A549 (cell line): ENCODE measurements at regions of chr20 and their contacts with region 1.

Region 1: GRCh38 chr20:62376112-62377063 is 9.3 kb upstream of the LAMA5 start:
- DNase-seq: peak in 1 of 2 experiments; percentile 81
- ATAC-seq: peak; percentile 70 to 85
- H3K4me3 ChIP-seq: no peak overlapping the region
- H3K27ac ChIP-seq: peak overlapping the region; percentile 81 to 94
- H3K4me1 ChIP-seq: peaks cover 75% of the 10 kb centered on the region
- CTCF ChIP-seq: peak; percentile 62
- EP300 ChIP-seq: no peak
- POLR2A ChIP-seq: no peak
- RAD21 ChIP-seq: peak; percentile 69 to 79

Region 2: DNA sequence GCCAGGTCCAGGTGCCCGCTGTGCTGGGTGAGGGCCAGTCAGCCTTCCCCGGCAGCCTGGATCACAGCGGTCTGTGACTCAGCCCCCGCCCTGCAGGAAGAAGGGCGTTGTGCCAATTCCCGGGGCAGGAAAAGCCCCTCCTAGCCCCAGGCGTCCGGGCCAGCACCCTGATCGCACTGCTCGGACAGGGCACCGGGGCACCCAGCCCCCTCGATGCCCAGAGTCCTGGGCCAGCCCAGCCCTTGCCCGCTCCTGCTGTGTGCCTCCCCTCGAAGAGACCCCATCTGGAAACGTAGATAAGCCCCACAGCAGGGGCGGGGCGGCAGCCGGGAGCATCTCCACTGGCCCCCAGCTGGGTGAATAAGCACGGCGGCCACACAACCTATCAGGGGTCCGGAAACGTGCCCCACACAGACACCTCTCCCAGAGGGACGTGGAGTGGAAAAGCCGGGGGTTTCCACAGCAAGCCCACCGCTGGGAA is 19.2 kb before region 1 on chr20:
- CTCF ChIA-PET with region 1: interaction called, 290 read pairs
- POLR2A ChIA-PET with region 1: no interaction called
- DNase-seq: peak in 1 of 2 experiments; percentile 77
- ATAC-seq: peak in 1 of 2 experiments; percentile 7; a peak in 3 of 6 replicates
- H3K4me3 ChIP-seq: peak overlapping the region; percentile 41; the same call in 2 of the 3 replicates
- H3K27ac ChIP-seq: peak overlapping the region; percentile 97 to 99
- H3K4me1 ChIP-seq: peaks cover 98% of the 10 kb centered on the region
- CTCF ChIP-seq: no peak
- EP300 ChIP-seq: peak in 1 of 2 experiments; percentile 46; a peak in 1 of 5 replicates
- POLR2A ChIP-seq: 0 out of 2 replicates have a peak, but pooled peaks have one; percentile 20
- RAD21 ChIP-seq: peak in 1 of 2 experiments; percentile 12; a peak in 1 of 5 replicates